ENCODE measurements at regions of chr22 and their contacts with region 1.

Region 1: GRCh38 chr22:24845041-24845898 is 39.3 kb downstream of the SGSM1 start:
- DNase-seq: no peak
- H3K4me3 Mint-ChIP-seq: no peak overlapping the region
- H3K27ac Mint-ChIP-seq: no peak overlapping the region
- H3K4me1 Mint-ChIP-seq: peaks cover 3% of the 10 kb centered on the region
- H3K27me3 Mint-ChIP-seq: no peaks in the 10 kb centered on the region

Region 2: DNA sequence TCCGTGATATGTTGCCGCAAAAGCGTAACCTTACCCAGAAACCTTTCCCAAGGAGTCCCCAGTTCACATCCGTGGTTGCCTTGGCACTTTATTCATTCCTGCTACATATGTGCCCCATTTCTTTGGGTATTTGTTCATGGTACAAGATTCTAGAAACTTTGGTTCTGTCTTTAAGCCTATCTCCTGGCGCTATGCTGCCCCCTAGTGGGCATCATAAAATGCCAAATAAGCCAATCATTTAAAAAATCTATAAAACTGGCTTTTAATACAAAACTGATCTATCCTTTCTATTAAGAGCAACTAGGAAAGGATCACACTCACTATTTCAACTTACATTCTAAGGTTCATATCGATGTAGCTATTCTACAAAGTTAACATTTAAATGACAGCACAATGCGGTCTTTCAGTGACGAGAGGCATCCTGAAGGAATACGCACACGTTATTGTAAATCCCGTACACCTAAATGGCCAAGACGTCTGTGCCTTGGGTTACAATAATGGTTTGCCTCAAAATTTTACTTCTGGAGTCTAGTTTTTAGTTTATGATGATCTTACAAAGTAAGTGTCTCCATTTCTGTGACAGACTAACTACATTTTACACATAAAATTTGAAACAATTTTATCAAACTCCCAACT is 87.0 kb before region 1 on chr22:
- CTCF ChIA-PET with region 1: interaction called, 8 read pairs
- POLR2A ChIA-PET with region 1: no interaction called
- intact Hi-C with region 1: loop called (anchors 1 kb)
- DNase-seq: peak; percentile 60
- H3K4me3 Mint-ChIP-seq: no peak overlapping the region
- H3K27ac Mint-ChIP-seq: no peak overlapping the region
- H3K4me1 Mint-ChIP-seq: no peaks in the 10 kb centered on the region
- H3K27me3 Mint-ChIP-seq: no peaks in the 10 kb centered on the region

Region 3: DNA sequence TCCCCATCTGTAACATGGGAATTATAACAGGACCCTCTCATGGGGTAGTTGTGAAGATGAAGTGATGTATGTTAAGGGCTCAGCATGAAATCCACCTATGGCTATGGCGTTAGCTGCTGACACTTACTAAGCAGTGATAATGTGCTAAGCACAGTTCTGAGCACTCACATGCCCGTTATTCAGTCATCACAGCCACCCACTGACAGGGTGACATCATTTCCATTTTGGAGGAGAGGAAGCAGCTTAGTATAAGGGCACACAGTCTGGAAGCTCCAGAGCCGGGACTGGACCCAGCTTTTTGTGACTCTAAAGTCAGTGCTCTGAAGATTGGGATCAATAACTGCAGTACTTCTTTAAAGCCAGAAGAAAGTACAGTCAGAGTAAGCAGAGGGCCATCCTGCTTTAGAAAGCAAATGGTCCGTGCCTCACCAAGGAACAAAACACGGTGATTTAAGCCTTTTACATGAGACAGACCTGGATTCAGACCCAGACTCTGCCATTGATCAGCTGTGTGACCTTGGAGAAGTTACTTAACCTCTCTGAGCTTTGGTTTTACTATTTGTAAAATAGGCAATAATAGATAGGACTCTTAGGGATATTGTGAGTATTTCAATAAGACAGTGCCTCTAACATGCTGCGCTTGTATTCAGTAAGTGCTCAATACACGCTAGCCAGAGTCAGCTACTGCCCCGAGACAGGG is 22.2 kb after region 1 on chr22:
- CTCF ChIA-PET with region 1: interaction called, 12 read pairs
- POLR2A ChIA-PET with region 1: no interaction called
- intact Hi-C with region 1: no loop called
- DNase-seq: no peak
- H3K4me3 Mint-ChIP-seq: no peak overlapping the region
- H3K27ac Mint-ChIP-seq: no peak overlapping the region
- H3K4me1 Mint-ChIP-seq: no peaks in the 10 kb centered on the region
- H3K27me3 Mint-ChIP-seq: no peaks in the 10 kb centered on the region

Measured in activated CD4-positive, alpha-beta memory T cell treated with anti-CD3 and anti-CD28 coated beads for 36 hours (primary cell).